ENCODE measurements at regions of chr1 and their contacts with region 1.

Region 1: DNA sequence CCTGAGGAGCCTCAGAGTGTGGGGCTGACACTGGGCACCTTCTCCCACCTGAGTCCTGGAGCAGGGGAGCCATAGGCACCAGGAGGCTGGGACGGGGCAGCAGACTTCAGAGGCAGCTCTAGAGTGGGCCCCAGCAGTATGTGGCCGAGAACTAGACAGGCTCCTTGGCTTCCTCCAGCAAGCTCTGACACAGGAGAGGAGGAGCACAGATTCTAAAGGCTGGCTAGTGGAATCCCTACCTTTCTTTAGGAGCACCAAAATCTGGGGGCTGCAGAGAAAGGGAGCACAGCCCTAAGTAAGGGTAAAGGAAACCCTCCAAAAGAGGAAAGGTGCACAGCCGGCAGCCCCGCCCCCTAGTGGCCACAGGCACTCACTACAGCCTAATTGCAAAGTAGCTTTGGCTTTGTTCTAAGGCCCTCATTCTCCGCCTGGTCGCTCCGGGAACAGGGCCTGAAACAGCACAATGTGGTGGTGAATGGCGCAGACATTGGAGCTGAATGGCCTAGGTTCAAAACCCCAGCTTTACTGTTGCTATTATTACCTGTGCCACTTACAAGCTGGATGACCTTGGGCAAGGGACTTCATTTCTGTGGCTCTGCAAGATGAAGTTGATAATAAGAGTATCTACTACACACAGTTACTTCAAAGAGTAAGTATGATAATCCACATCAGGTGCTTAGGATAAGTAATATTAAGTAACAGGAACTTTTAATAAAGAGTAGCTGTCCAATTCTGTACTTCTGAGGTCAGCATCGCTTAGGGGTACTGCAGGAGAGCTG is 8.8 kb upstream of the GUCA2A start:
- DNase-seq: peak; percentile 74
- H3K4me3 Mint-ChIP-seq: no peak overlapping the region
- H3K27ac Mint-ChIP-seq: no peak overlapping the region
- H3K4me1 Mint-ChIP-seq: no peaks in the 10 kb centered on the region
- H3K27me3 Mint-ChIP-seq: no peaks in the 10 kb centered on the region

Region 2: GRCh38 chr1:42146626-42147320 is 26.6 kb before region 1 on chr1:
- CTCF ChIA-PET with region 1: interaction called, 12 read pairs
- DNase-seq: peak; percentile 85
- H3K4me3 Mint-ChIP-seq: no peak overlapping the region
- H3K27ac Mint-ChIP-seq: no peak overlapping the region
- H3K4me1 Mint-ChIP-seq: peaks cover 6% of the 10 kb centered on the region
- H3K27me3 Mint-ChIP-seq: peaks cover 4% of the 10 kb centered on the region

Region 3: GRCh38 chr1:42157667-42158066 is 15.7 kb before region 1 on chr1:
- CTCF ChIA-PET with region 1: interaction called, 12 read pairs
- DNase-seq: peak; percentile 37
- H3K4me3 Mint-ChIP-seq: no peak overlapping the region
- H3K27ac Mint-ChIP-seq: no peak overlapping the region
- H3K4me1 Mint-ChIP-seq: peaks cover 6% of the 10 kb centered on the region
- H3K27me3 Mint-ChIP-seq: peaks cover 21% of the 10 kb centered on the region

Region 4: DNA sequence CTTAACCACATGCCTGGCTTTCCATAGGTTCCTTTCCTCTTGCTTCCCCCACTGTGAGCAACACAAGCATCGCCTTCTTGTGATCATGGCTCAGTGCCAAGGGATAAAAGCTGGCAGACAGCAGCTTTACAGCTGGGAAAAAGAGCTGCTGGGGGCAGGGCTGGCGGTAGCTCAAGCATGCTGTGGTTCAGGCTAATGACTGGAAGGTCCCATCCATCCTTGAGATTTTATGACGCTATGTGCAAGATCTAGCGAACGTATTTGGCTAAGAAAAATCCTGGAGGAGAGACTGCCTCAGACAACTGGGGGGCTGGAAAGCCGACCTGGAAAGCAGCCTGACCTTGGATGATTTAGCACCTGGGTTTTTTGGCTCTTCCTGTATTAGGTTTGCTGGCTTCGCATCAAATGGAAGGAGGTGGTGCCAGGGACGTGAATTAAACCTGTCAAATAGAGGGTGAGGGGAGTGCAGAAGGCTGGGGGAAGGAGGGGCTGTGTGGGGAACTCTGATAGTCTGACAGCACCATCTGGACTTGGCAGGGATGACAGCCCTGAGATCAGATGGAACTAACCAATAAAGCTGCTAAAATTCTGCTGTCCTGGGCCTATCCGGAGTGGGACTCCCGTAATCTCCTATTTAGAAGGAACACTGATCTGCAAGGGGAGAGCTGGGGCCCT is 247.7 kb after region 1 on chr1:
- CTCF ChIA-PET with region 1: no interaction called
- DNase-seq: no peak
- H3K4me3 Mint-ChIP-seq: no peak overlapping the region
- H3K27ac Mint-ChIP-seq: no peak overlapping the region
- H3K4me1 Mint-ChIP-seq: no peaks in the 10 kb centered on the region
- H3K27me3 Mint-ChIP-seq: peaks cover 10% of the 10 kb centered on the region

Measured in activated naive CD4-positive, alpha-beta T cell treated with anti-CD3 and anti-CD28 coated beads, Interleukin-2, amount 10 ng/mL, durations not matched to agents 7 days and 5 days (primary cell).